ENCODE measurements at regions of chr1 and their contacts with region 1.

Region 1: GRCh38 chr1:151254217-151255213 is at the start of gene PSMD4:
- DNase-seq: peak; percentile 94
- ATAC-seq: peak; percentile 96
- H3K4me3 ChIP-seq: peak within 1 kb of the TSS; percentile 67 to 90 (median 86)
- H3K27ac ChIP-seq: peak within 1 kb of the TSS; percentile 86
- H3K4me1 ChIP-seq: peaks cover 34% of the 10 kb centered on the region
- H3K27me3 ChIP-seq: no peaks in the 10 kb centered on the region; a peak in 1 of 5 replicates
- CTCF ChIP-seq: no peak
- EP300 ChIP-seq: no peak
- POLR2A ChIP-seq: peak; percentile 91 to 96
- RAD21 ChIP-seq: no peak
- total RNA-seq, gene PSMD4: 243 and 320 TPM in 2 replicates

Region 2: GRCh38 chr1:151189638-151190445 is 64.7 kb before region 1 on chr1 and contains the start of gene VPS72:
- CTCF ChIA-PET with region 1: no interaction called
- POLR2A ChIA-PET with region 1: interaction called, 14 read pairs
- in situ Hi-C with region 1: no loop called
- intact Hi-C with region 1: no loop called
- DNase-seq: peak; percentile 85
- ATAC-seq: peak; percentile 95
- H3K4me3 ChIP-seq: peak within 1 kb of the TSS; percentile 78 to 82 (median 81)
- H3K27ac ChIP-seq: peak within 1 kb of the TSS; percentile 78
- H3K4me1 ChIP-seq: peaks cover 42% of the 10 kb centered on the region
- H3K27me3 ChIP-seq: no peaks in the 10 kb centered on the region
- CTCF ChIP-seq: peak; percentile 51
- EP300 ChIP-seq: peak in 1 of 2 experiments; percentile 44; a peak in 1 of 4 replicates
- POLR2A ChIP-seq: peak in 1 of 2 experiments; percentile 91
- RAD21 ChIP-seq: peak; percentile 14; the same call in 1 of the 2 replicates
- total RNA-seq, gene VPS72: 34.5 TPM in 2 replicates

Region 3: DNA sequence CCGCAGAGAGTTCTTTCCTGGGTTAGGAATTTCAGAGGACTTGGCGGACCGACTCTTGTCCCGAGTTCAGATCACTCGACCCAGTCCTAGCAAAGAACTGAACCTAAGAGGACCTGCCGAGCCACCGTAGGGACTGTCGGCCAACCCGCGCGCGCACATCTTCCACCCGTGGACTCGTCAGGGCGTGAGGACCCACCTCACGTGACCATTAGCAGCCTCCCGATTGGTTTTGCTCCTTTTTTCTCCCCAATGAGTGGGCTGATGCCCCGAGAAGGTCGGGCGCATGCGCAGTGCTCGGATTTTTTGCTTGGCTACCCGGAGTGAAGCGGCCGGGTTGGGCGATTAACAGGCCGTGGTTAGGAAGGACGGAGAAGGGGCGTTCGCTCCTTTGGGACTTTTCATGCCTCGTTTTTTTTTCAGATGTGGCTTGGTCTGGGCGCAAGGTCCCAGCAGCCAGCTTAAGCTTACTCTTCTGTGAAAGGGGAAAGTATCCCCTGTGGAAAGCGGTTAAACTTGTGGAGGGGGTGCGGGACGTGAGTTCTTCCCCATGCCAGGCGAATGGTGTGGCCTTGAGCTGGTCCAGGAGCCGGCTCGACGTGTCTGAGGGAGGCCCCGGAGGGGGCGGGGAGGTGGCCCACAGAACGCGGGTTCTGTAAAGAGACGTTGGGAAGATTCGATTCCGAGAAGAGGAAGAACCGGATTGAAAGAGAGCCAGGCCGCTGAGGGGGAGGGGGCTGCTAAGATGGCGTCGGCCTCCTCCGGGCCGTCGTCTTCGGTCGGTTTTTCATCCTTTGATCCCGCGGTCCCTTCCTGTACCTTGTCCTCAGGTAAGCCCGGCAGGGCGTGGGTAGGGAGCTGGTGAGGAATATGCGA is 56.0 kb before region 1 on chr1 and contains the start of gene PIP5K1A:
- CTCF ChIA-PET with region 1: interaction called, 3 read pairs
- POLR2A ChIA-PET with region 1: interaction called, 12 read pairs
- in situ Hi-C with region 1: no loop called
- intact Hi-C with region 1: loop called (anchors 1 kb)
- DNase-seq: peak; percentile 97
- ATAC-seq: peak; percentile 76
- H3K4me3 ChIP-seq: peak within 1 kb of the TSS; percentile 87 to 95 (median 94)
- H3K27ac ChIP-seq: peak within 1 kb of the TSS; percentile 93
- H3K4me1 ChIP-seq: peaks cover 34% of the 10 kb centered on the region
- H3K27me3 ChIP-seq: no peaks in the 10 kb centered on the region; a peak in 1 of 5 replicates
- CTCF ChIP-seq: no peak
- EP300 ChIP-seq: no peak
- POLR2A ChIP-seq: peak; percentile 74 to 84
- RAD21 ChIP-seq: no peak
- total RNA-seq, gene PIP5K1A: 43.8 and 45.3 TPM in 2 replicates

Region 4: GRCh38 chr1:151211972-151212705 is 42.4 kb before region 1 on chr1:
- CTCF ChIA-PET with region 1: no interaction called
- POLR2A ChIA-PET with region 1: no interaction called
- in situ Hi-C with region 1: no loop called
- intact Hi-C with region 1: no loop called
- DNase-seq: no peak
- ATAC-seq: no peak
- H3K4me3 ChIP-seq: no peak overlapping the region
- H3K27ac ChIP-seq: no peak overlapping the region
- H3K4me1 ChIP-seq: peaks cover 20% of the 10 kb centered on the region
- H3K27me3 ChIP-seq: no peaks in the 10 kb centered on the region
- CTCF ChIP-seq: no peak
- EP300 ChIP-seq: no peak
- POLR2A ChIP-seq: no peak
- RAD21 ChIP-seq: no peak

Region 5: GRCh38 chr1:151267760-151268159 is 13.2 kb after region 1 on chr1:
- CTCF ChIA-PET with region 1: no interaction called
- POLR2A ChIA-PET with region 1: interaction called, 42 read pairs
- in situ Hi-C with region 1: no loop called
- intact Hi-C with region 1: loop called (anchors 1 kb)
- DNase-seq: no peak
- ATAC-seq: no peak
- H3K4me3 ChIP-seq: no peak overlapping the region
- H3K27ac ChIP-seq: no peak overlapping the region
- H3K4me1 ChIP-seq: peaks cover 26% of the 10 kb centered on the region
- H3K27me3 ChIP-seq: no peaks in the 10 kb centered on the region
- CTCF ChIP-seq: no peak
- EP300 ChIP-seq: no peak
- POLR2A ChIP-seq: no peak
- RAD21 ChIP-seq: no peak

Measured in HepG2 (cell line).